Esophagus squamous epithelium (tissue), 5 donors: ENCODE measurements at regions of chr10 and their contacts with region 1.

Region 1: GRCh38 chr10:109978481-109978880 is 29.3 kb upstream of the ADD3 start:
- DNase-seq: no peak
- H3K4me3 ChIP-seq: no peak overlapping the region
- H3K27ac ChIP-seq: peak overlapping the region in 2 of 4 donors; percentile 5 to 18
- H3K4me1 ChIP-seq: peaks cover 0 to 13% (median 0%) of the 10 kb centered on the region in 3 donors
- H3K27me3 ChIP-seq: no peaks in the 10 kb centered on the region
- CTCF ChIP-seq: peak in 5 of 6 experiments; percentile 38 to 74 (median 67)
- POLR2A ChIP-seq: no peak

Region 2: DNA sequence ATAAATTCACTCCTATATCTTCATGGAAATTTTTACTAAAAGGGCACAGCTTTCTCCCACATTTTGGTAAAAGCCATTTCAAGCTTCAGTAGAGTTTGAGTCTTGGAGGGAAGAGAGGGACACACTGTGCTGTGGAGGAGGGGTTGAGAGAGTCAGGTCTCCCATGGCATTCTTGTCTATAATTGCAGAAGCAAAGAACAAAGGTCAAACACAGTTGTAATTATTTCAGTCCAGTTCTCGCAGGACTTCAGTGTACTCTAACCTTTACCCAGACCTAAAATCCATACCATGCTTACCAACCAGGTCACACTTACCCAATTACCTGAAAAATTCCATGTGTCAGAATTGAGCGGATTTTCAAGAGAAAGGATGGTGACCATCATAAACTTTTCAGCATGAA is 353.5 kb before region 1 on chr10:
- intact Hi-C with region 1: no loop called
- DNase-seq: no peak
- H3K4me3 ChIP-seq: no peak overlapping the region
- H3K27ac ChIP-seq: no peak overlapping the region
- H3K4me1 ChIP-seq: no peaks in the 10 kb centered on the region
- H3K27me3 ChIP-seq: no peaks in the 10 kb centered on the region
- CTCF ChIP-seq: no peak
- POLR2A ChIP-seq: no peak

Region 3: GRCh38 chr10:110129490-110129889 is 151.0 kb after region 1 on chr10:
- intact Hi-C with region 1: loop called (anchors 10 kb)
- DNase-seq: no peak
- H3K4me3 ChIP-seq: no peak overlapping the region
- H3K27ac ChIP-seq: no peak overlapping the region
- H3K4me1 ChIP-seq: no peaks in the 10 kb centered on the region
- H3K27me3 ChIP-seq: no peaks in the 10 kb centered on the region
- CTCF ChIP-seq: no peak
- POLR2A ChIP-seq: no peak